CD14-positive monocyte (primary cell): ENCODE measurements at regions of chrX and their contacts with region 1.

Region 1: DNA sequence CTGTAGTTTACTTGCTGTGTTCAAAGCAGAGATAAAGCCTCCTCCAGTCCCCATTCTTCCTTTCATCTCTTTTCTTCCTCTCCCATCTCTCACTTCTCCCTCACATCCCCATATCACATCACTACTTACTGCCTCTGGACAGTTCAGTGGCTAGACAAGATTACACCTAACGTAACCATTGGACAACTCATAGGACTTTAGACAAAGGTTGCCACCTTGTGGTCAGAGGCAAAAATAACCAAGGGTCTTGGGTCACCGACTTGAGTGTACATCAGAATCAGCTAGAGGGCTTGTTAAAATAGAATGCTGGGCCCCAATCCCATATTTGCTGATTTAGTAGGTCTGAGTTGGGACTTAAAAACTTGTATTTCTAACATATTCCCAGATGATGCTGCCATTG is 109.3 kb upstream of the DGKK start:
- DNase-seq: peak; percentile 15 to 52 (median 41)
- H3K4me3 ChIP-seq: no peak overlapping the region
- H3K4me3 Mint-ChIP-seq: no peak overlapping the region
- H3K27ac ChIP-seq: no peak overlapping the region
- H3K27ac Mint-ChIP-seq: no peak overlapping the region
- H3K4me1 ChIP-seq: no peaks in the 10 kb centered on the region
- H3K4me1 Mint-ChIP-seq: peaks cover 1% of the 10 kb centered on the region
- H3K27me3 ChIP-seq: no peaks in the 10 kb centered on the region
- H3K27me3 Mint-ChIP-seq: peaks cover 0 to 6% (median 0%) of the 10 kb centered on the region in 3 donors
- CTCF ChIP-seq: peak; percentile 65

Region 2: GRCh38 chrX:49915361-49916222 is 664.4 kb before region 1 on chrX:
- intact Hi-C with region 1: loop called (anchors 5 to 10 kb)
- DNase-seq: peak; percentile 36 to 50 (median 46)
- H3K4me3 ChIP-seq: no peak overlapping the region
- H3K4me3 Mint-ChIP-seq: no peak overlapping the region
- H3K27ac ChIP-seq: no peak overlapping the region
- H3K27ac Mint-ChIP-seq: no peak overlapping the region
- H3K4me1 ChIP-seq: no peaks in the 10 kb centered on the region
- H3K4me1 Mint-ChIP-seq: peaks cover under 1% of the 10 kb centered on the region
- H3K27me3 ChIP-seq: no peaks in the 10 kb centered on the region
- H3K27me3 Mint-ChIP-seq: peaks cover 0 to 1% (median 0%) of the 10 kb centered on the region in 3 donors
- CTCF ChIP-seq: peak; percentile 73